ENCODE measurements at regions of chr7 and their contacts with region 1.

Region 1: DNA sequence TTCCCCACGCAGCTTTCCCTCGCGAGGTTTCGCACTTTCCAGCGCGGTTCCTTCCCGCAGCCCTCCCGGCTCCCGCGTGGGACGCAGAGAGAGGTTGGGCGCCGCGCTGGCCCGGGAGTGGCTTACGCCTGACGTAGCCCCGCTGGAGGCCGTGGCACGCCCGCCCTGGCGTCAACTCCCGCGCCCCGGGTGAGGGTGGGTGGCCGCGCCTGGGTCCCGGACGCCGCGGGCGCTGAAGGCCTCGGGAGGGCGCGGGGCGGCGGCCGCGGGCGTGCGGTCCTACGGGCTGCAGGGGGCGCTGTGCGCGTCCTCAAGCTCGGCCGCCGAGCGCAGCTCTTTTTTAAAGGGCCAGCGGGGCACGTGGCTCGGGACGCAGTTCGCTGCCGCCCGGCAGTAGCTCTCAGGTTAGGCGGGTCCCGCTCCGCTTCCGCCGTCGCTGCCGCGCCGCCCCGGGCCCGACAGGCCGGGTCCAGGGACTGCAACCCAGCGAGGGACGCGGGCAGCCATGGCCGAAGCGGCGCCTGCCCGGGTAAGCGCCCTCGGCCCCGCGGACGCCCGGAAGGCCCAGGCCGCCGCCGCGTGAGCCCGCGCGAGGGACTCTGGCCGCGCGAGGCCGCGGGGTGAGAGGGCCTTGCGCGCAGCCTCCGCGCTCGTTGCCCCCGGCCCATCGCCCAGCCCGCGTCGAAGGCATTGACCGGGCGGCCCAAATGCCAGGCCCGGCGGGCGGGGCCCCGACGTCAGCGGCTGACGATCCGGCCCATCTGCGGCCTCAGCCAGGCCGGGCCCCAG is at the start of gene ZNF783:
- DNase-seq: peak; percentile 85
- ATAC-seq: peak; percentile 90
- H3K4me3 ChIP-seq: peak within 1 kb of the TSS; percentile 69
- H3K27ac ChIP-seq: peak within 1 kb of the TSS; percentile 82
- H3K4me1 ChIP-seq: peaks cover 18% of the 10 kb centered on the region
- H3K27me3 ChIP-seq: no peaks in the 10 kb centered on the region
- CTCF ChIP-seq: peak; percentile 62
- total RNA-seq, gene ZNF783: 6.9 and 7.0 TPM in 2 replicates

Region 2: DNA sequence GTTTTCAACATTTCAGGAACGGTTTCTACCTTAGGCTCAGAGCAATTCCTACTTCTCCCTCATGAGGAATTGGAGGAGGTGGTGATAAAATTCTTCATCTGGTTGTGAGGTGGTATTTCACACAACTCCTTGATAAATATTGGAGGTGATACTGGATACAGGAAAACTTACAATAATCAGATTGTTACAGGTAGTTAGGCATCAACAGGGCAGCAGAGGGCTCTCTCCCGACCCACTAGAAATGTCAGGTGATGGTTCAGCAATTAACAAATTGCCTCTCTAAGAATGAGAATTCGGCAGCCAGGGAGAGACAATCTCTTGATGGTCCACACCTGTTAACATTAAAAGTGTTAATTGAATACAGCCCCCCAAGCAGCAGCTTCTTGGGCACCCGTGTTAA is 194.1 kb before region 1 on chr7:
- CTCF ChIA-PET with region 1: no interaction called
- POLR2A ChIA-PET with region 1: no interaction called
- intact Hi-C with region 1: no loop called
- DNase-seq: peak; percentile 8
- ATAC-seq: no peak
- H3K4me3 ChIP-seq: no peak overlapping the region
- H3K27ac ChIP-seq: no peak overlapping the region
- H3K4me1 ChIP-seq: no peaks in the 10 kb centered on the region
- H3K27me3 ChIP-seq: no peaks in the 10 kb centered on the region
- CTCF ChIP-seq: peak; percentile 44

Region 3: GRCh38 chr7:149218469-149219420 is 43.3 kb before region 1 on chr7:
- CTCF ChIA-PET with region 1: no interaction called
- POLR2A ChIA-PET with region 1: no interaction called
- intact Hi-C with region 1: no loop called
- DNase-seq: no peak
- ATAC-seq: no peak
- H3K4me3 ChIP-seq: no peak overlapping the region
- H3K27ac ChIP-seq: no peak overlapping the region
- H3K4me1 ChIP-seq: 0 out of 2 replicates have a peak, but pooled peaks cover 4% of the 10 kb centered on the region
- H3K27me3 ChIP-seq: no peaks in the 10 kb centered on the region
- CTCF ChIP-seq: no peak

Region 4: GRCh38 chr7:149229526-149229925 is 32.5 kb before region 1 on chr7:
- CTCF ChIA-PET with region 1: interaction called, 12 read pairs
- POLR2A ChIA-PET with region 1: no interaction called
- intact Hi-C with region 1: no loop called
- DNase-seq: no peak
- ATAC-seq: no peak
- H3K4me3 ChIP-seq: no peak overlapping the region
- H3K27ac ChIP-seq: no peak overlapping the region
- H3K4me1 ChIP-seq: peaks cover 24% of the 10 kb centered on the region
- H3K27me3 ChIP-seq: no peaks in the 10 kb centered on the region
- CTCF ChIP-seq: no peak

Region 5: GRCh38 chr7:149284850-149285626 is 23.0 kb after region 1 on chr7:
- CTCF ChIA-PET with region 1: interaction called, 9 read pairs
- POLR2A ChIA-PET with region 1: no interaction called
- intact Hi-C with region 1: loop called (anchors 2 kb)
- DNase-seq: peak; percentile 92
- ATAC-seq: peak; percentile 85
- H3K4me3 ChIP-seq: peak overlapping the region; percentile 67
- H3K27ac ChIP-seq: no peak overlapping the region
- H3K4me1 ChIP-seq: peaks cover 34% of the 10 kb centered on the region
- H3K27me3 ChIP-seq: no peaks in the 10 kb centered on the region
- CTCF ChIP-seq: no peak; the same call in 1 of the 2 replicates

Region 6: DNA sequence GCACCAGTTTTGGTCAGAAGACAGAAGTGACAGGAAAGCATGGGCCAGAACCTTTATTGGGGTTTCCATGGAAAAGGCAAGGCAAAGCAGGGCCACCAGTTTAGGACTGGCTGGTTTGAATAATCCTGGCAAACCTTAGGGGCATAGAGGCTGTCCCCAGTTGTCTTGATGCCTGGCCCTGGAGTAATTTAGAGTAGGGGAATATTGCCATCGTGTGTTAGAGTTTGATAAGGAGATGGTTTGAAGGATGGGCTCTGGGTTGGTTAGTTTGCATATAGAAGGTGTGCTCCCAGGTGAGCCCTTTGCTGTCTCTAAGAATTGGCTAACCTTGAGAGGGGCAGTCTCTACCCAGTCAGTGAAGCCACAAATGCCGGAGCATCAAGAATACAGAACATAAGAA is 119.2 kb after region 1 on chr7:
- CTCF ChIA-PET with region 1: no interaction called
- POLR2A ChIA-PET with region 1: no interaction called
- intact Hi-C with region 1: loop called (anchors 1 kb)
- DNase-seq: peak; percentile 45
- ATAC-seq: peak; percentile 81
- H3K4me3 ChIP-seq: no peak overlapping the region
- H3K27ac ChIP-seq: no peak overlapping the region
- H3K4me1 ChIP-seq: no peaks in the 10 kb centered on the region
- H3K27me3 ChIP-seq: no peaks in the 10 kb centered on the region
- CTCF ChIP-seq: peak; percentile 48; the same call in 1 of the 2 replicates

Region 7: GRCh38 chr7:149500910-149501309 is 238.9 kb after region 1 on chr7:
- CTCF ChIA-PET with region 1: no interaction called
- POLR2A ChIA-PET with region 1: no interaction called
- intact Hi-C with region 1: no loop called
- DNase-seq: no peak
- ATAC-seq: no peak
- H3K4me3 ChIP-seq: no peak overlapping the region
- H3K27ac ChIP-seq: no peak overlapping the region
- H3K4me1 ChIP-seq: peaks cover 13% of the 10 kb centered on the region
- H3K27me3 ChIP-seq: no peaks in the 10 kb centered on the region
- CTCF ChIP-seq: no peak

Measured in PC-3 (cell line).